Activated B cell treated with CpG ODN at 0.5 μM for 24 hours (primary cell): ENCODE measurements at regions of chr6 and their contacts with region 1.

Region 1: DNA sequence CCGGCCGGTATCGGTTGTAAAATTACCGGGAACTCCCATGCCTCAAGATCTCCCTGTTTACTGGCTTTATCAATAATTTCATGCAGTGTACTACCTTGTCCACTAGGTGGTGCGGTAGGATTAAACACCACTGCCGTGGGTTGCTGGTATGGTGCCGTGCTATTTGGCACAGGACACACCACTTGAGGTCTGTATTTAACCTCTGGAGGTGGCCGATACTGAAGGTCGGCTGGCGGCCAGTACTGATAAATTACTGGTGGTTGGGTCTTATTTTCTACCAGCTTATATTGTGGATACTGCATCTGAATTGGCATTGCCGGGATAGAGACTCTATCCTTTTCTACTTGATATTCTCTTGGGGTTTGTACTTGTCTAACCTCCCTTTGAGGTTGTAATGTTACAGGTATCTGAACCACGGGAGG is 14.3 kb upstream of the PTCRA start:
- DNase-seq: no peak
- ATAC-seq: peak; percentile 100
- H3K4me3 Mint-ChIP-seq: no peak overlapping the region
- H3K27ac Mint-ChIP-seq: no peak overlapping the region
- H3K4me1 Mint-ChIP-seq: peaks cover 12% of the 10 kb centered on the region
- H3K27me3 Mint-ChIP-seq: no peaks in the 10 kb centered on the region
- CTCF ChIP-seq: peak; percentile 36

Region 2: GRCh38 chr6:41824571-41825569 is 1076.7 kb before region 1 on chr6:
- CTCF ChIA-PET with region 1: no interaction called
- POLR2A ChIA-PET with region 1: no interaction called
- intact Hi-C with region 1: no loop called
- DNase-seq: no peak
- ATAC-seq: no peak
- H3K4me3 Mint-ChIP-seq: no peak overlapping the region
- H3K27ac Mint-ChIP-seq: no peak overlapping the region
- H3K4me1 Mint-ChIP-seq: no peaks in the 10 kb centered on the region
- H3K27me3 Mint-ChIP-seq: no peaks in the 10 kb centered on the region
- CTCF ChIP-seq: no peak

Region 3: GRCh38 chr6:42306439-42307140 is 595.0 kb before region 1 on chr6:
- CTCF ChIA-PET with region 1: no interaction called
- POLR2A ChIA-PET with region 1: no interaction called
- intact Hi-C with region 1: loop called (anchors 5 kb)
- DNase-seq: no peak
- ATAC-seq: no peak
- H3K4me3 Mint-ChIP-seq: no peak overlapping the region
- H3K27ac Mint-ChIP-seq: no peak overlapping the region
- H3K4me1 Mint-ChIP-seq: no peaks in the 10 kb centered on the region
- H3K27me3 Mint-ChIP-seq: no peaks in the 10 kb centered on the region
- CTCF ChIP-seq: no peak

Region 4: GRCh38 chr6:42547407-42548329 is 353.9 kb before region 1 on chr6:
- CTCF ChIA-PET with region 1: no interaction called
- POLR2A ChIA-PET with region 1: no interaction called
- intact Hi-C with region 1: no loop called
- DNase-seq: peak; percentile 90
- ATAC-seq: peak; percentile 99
- H3K4me3 Mint-ChIP-seq: peak overlapping the region; percentile 81
- H3K27ac Mint-ChIP-seq: peak overlapping the region; percentile 83
- H3K4me1 Mint-ChIP-seq: peaks cover 12% of the 10 kb centered on the region
- H3K27me3 Mint-ChIP-seq: no peaks in the 10 kb centered on the region
- CTCF ChIP-seq: peak; percentile 90

Region 5: DNA sequence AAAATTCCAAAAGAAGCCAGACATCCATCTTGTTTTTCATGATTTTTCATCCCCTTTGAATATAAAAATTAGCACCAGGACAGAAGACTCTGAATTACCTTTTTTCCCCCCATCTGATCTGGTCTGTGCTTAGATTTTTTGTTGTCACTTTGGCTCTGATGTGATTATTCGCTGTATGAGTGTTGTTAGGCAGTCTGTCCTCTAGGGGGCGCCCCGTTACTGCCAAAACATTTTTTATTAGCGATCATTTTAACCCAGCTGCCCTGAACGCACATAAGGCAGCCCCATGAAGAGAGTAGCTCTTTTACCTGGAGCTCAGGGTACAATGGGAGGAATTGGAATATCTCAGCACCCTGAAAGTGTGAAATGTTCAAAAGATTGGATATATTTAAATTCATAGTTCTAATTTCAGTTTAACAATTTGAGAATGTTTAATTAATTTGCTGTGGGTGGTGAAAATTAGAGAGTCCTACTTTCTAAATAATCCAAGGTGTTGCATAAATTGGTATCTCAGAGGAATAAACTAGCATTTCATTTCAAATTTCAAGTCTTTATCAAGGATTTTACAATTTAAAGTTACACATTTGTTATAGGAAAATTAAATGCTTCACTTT is 239.9 kb before region 1 on chr6:
- CTCF ChIA-PET with region 1: interaction called, 15 read pairs
- POLR2A ChIA-PET with region 1: interaction called, 5 read pairs
- intact Hi-C with region 1: loop called (anchors 1 kb)
- DNase-seq: peak; percentile 65
- ATAC-seq: peak; percentile 96
- H3K4me3 Mint-ChIP-seq: no peak overlapping the region
- H3K27ac Mint-ChIP-seq: no peak overlapping the region
- H3K4me1 Mint-ChIP-seq: no peaks in the 10 kb centered on the region
- H3K27me3 Mint-ChIP-seq: no peaks in the 10 kb centered on the region
- CTCF ChIP-seq: peak; percentile 74

Region 6: GRCh38 chr6:42726485-42727086 is 175.0 kb before region 1 on chr6:
- CTCF ChIA-PET with region 1: interaction called, 3 read pairs
- POLR2A ChIA-PET with region 1: interaction called, 4 read pairs
- intact Hi-C with region 1: loop called (anchors 1 kb)
- DNase-seq: no peak
- ATAC-seq: peak; percentile 98
- H3K4me3 Mint-ChIP-seq: peak overlapping the region; percentile 89
- H3K27ac Mint-ChIP-seq: peak overlapping the region; percentile 96
- H3K4me1 Mint-ChIP-seq: peaks cover 19% of the 10 kb centered on the region
- H3K27me3 Mint-ChIP-seq: no peaks in the 10 kb centered on the region
- CTCF ChIP-seq: peak; percentile 84

Region 7: GRCh38 chr6:42921801-42922200 is 20.3 kb after region 1 on chr6:
- CTCF ChIA-PET with region 1: no interaction called
- POLR2A ChIA-PET with region 1: no interaction called
- intact Hi-C with region 1: no loop called
- DNase-seq: no peak
- ATAC-seq: no peak
- H3K4me3 Mint-ChIP-seq: no peak overlapping the region
- H3K27ac Mint-ChIP-seq: no peak overlapping the region
- H3K4me1 Mint-ChIP-seq: peaks cover 18% of the 10 kb centered on the region
- H3K27me3 Mint-ChIP-seq: no peaks in the 10 kb centered on the region
- CTCF ChIP-seq: no peak

Region 8: DNA sequence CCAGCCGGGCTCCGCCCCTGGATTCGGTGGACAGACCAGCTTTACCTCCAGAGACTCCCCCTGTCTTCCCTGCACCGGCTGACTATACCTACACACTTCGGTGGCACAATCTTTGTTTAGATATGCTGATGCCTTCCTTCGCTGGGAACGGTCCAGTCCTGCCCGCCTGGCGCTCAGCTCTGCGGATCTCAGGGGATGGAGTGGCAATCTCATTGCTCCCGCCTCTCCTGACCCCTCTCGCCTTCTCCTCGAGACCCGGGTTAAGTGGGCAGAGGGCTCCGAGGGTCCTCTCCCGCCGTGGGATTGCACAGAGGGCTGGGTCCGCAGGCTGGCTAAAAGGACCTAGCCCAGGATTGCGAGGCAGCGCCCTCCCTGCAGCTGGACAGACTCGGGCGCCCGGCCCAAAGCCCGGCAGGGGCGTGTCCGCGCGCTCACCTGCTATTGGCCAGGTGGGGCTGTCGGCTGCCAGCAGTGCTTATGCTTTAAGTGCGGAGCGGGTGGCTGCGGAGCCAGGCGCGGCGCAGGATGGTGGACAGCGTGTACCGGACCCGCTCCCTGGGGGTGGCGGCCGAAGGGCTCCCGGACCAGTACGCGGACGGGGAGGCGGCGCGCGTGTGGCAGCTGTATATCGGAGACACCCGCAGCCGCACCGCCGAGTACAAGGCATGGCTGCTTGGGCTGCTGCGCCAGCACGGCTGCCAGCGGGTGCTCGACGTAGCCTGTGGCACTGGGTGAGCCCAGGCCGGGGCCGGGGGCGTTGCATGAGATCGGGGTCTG is 58.9 kb after region 1 on chr6 and contains the start of gene GNMT:
- CTCF ChIA-PET with region 1: no interaction called
- POLR2A ChIA-PET with region 1: no interaction called
- intact Hi-C with region 1: loop called (anchors 2 kb)
- DNase-seq: peak; percentile 47
- ATAC-seq: peak; percentile 83
- H3K4me3 Mint-ChIP-seq: peak within 1 kb of the TSS; percentile 70
- H3K27ac Mint-ChIP-seq: peak within 1 kb of the TSS; percentile 7
- H3K4me1 Mint-ChIP-seq: peaks cover 14% of the 10 kb centered on the region
- H3K27me3 Mint-ChIP-seq: no peaks in the 10 kb centered on the region
- CTCF ChIP-seq: no peak
- total RNA-seq, gene GNMT: 1.7 and 2.3 TPM in 2 replicates

Region 9: GRCh38 chr6:43129434-43130194 is 228.1 kb after region 1 on chr6:
- CTCF ChIA-PET with region 1: no interaction called
- POLR2A ChIA-PET with region 1: no interaction called
- intact Hi-C with region 1: loop called (anchors 1 kb)
- DNase-seq: no peak
- ATAC-seq: peak; percentile 50
- H3K4me3 Mint-ChIP-seq: no peak overlapping the region
- H3K27ac Mint-ChIP-seq: no peak overlapping the region
- H3K4me1 Mint-ChIP-seq: no peaks in the 10 kb centered on the region
- H3K27me3 Mint-ChIP-seq: no peaks in the 10 kb centered on the region
- CTCF ChIP-seq: no peak

Region 10: DNA sequence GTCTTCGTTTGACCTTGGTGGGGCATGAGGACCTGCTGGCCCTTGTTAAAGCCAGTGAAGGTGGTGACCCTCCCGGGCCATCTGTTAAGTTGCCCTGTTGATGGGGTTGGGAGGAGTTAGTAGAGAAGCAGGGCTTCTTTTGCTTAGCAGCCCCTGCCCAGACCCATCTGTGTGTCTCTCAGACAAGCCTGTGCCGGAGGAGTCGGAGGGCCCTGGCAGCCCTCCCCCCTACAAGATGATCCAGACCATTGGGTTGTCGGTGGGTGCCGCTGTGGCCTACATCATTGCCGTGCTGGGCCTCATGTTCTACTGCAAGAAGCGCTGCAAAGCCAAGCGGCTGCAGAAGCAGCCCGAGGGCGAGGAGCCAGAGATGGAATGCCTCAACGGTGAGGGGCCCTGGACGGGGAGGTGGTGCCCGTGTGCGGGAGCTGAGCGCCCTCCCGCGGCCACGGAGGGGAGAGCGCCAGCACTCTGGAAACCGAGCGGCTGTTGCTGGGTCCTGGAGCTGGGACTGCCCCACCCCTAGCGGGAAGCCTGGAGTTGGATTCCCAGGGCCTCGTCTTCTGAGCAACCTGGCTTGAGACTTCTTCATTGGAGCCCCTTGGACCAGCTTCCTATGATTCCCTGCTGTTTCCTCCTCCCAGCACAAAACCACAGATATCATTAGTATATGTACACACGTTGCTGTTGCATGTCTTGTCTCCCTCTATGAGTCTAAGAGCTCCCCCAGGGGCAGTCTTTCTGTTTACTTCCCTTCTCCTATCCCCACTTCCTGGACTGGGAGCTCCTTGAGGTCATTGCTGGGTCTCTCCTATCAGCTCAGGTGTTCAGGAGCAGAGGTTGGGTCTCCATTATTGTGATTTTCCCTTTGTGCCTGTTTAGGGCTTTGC is 241.9 kb after region 1 on chr6:
- CTCF ChIA-PET with region 1: interaction called, 22 read pairs
- POLR2A ChIA-PET with region 1: interaction called, 4 read pairs
- intact Hi-C with region 1: loop called (anchors 1 kb)
- DNase-seq: peak; percentile 70
- ATAC-seq: peak; percentile 99
- H3K4me3 Mint-ChIP-seq: peak overlapping the region; percentile 39
- H3K27ac Mint-ChIP-seq: no peak overlapping the region
- H3K4me1 Mint-ChIP-seq: peaks cover 4% of the 10 kb centered on the region
- H3K27me3 Mint-ChIP-seq: peaks cover 4% of the 10 kb centered on the region
- CTCF ChIP-seq: no peak